Posterior cingulate gyrus (tissue), 11 donors: ENCODE measurements at regions of chr11 and their contacts with region 1.

Region 1: GRCh38 chr11:102346748-102347461 is at the start of gene BIRC2:
- DNase-seq: peak; percentile 89 to 99 (median 94)

Region 2: GRCh38 chr11:102121329-102121728 is 225.6 kb before region 1 on chr11:
- intact Hi-C with region 1: no loop called
- DNase-seq: peak in 1 of 10 donors; percentile 42

Region 3: DNA sequence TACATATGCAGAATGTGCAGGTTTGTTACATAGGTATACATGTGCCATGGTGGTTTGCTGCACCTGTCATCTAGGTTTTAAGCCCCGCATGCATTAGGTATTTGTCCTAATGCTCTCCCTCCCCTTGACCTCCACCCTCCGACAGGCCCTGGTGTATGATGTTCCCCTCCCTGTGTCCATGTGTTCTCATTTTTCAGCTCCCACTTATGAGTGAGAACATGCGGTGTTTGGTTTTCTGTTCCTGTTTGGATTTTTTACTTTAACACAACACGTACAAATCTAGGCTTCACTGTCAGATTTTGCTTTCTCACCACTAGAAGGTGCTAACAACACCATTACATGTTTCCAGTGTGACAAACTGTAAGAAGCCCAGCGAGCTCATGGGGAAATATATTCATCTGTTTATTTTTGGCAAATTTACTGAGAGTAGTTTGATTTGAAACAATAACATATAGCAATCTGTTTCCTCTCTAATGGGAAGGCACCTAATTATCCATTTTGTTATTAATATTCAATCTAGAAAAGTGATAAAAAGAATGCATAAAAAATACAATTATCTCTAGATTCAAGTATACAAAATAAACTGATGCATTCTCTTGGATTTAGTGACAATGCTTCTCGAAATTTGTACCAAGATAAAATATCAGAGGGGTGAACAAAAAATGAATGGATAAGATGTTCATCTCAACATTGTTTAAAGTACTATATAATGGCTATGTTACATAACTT is 52.9 kb before region 1 on chr11:
- intact Hi-C with region 1: loop called (anchors 5 kb)
- DNase-seq: no peak

Region 4: GRCh38 chr11:102451681-102452460 is 105.0 kb after region 1 on chr11:
- intact Hi-C with region 1: loop called (anchors 5 kb)
- DNase-seq: peak; percentile 37 to 94 (median 62)

Region 5: GRCh38 chr11:102476812-102477211 is 129.9 kb after region 1 on chr11:
- intact Hi-C with region 1: no loop called
- DNase-seq: no peak

Region 6: DNA sequence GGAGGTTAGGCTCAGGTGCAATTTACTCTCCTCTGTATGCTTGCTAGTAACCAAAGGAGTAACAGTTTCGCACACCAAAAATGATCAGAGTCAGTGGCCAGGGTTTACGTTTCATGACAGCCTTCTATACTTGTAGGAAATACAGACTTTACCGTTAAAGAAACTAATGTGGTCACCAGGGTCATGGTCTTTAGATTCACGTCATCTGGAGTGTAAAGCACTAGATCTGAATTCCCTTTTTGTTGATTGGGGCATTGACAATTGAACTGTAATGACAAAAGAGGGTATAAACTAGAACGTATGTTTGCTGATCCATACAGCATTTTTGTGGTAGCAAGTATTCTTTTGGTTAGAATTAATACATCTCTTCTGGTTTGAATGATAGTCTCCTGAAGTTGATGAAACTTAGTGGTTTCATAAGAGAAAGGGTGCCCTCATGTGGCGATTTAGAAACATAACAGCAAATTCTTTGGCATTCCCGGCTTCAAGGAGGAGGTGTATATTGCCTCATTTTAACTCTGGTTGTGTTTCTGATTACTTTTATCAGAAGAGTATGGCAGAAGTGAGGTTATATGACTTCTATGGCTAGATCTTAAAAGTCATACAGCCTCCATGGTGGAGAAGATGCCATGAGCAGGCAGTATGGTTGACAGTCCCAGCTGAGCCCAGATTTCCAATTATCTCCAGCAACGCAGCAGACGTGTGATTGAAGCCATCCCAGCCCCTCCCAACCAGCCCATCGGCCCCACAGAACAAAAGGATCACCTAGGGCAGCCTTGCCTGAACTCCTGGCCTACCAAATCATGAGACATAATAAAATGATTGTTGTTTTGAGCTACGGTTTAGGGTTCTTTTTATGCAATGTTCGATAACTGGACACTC is 148.5 kb after region 1 on chr11:
- intact Hi-C with region 1: no loop called
- DNase-seq: peak in 3 of 10 donors; percentile 15 to 46 (median 37)